ENCODE measurements at regions of chr17 and their contacts with region 1.

Region 1: GRCh38 chr17:40443583-40444327 is 505 bp downstream of the IGFBP4 start:
- DNase-seq: peak; percentile 55 to 69 (median 62)
- H3K4me3 ChIP-seq: peak overlapping the region; percentile 67 to 73
- H3K4me3 Mint-ChIP-seq: peak overlapping the region; percentile 80 to 97 (median 86)
- H3K27ac ChIP-seq: peak overlapping the region; percentile 37
- H3K27ac Mint-ChIP-seq: peak overlapping the region; percentile 85 to 97 (median 93)
- H3K4me1 ChIP-seq: peaks cover 48% of the 10 kb centered on the region
- H3K4me1 Mint-ChIP-seq: peaks cover 23 to 51% (median 35%) of the 10 kb centered on the region in 4 donors
- H3K27me3 ChIP-seq: no peaks in the 10 kb centered on the region
- H3K27me3 Mint-ChIP-seq: peaks cover 2 to 6% of the 10 kb centered on the region in 2 donors

Region 2: GRCh38 chr17:40362696-40363110 is 81.1 kb before region 1 on chr17:
- CTCF ChIA-PET with region 1: interaction called, 11 read pairs
- POLR2A ChIA-PET with region 1: interaction called, 5 read pairs
- intact Hi-C with region 1: loop called (anchors 2 kb)
- DNase-seq: peak; percentile 72 to 76 (median 74)
- H3K4me3 ChIP-seq: peak overlapping the region in 1 of 2 donors; percentile 47
- H3K4me3 Mint-ChIP-seq: peak overlapping the region in 7 of 8 donors; percentile 39 to 82 (median 64)
- H3K27ac ChIP-seq: no peak overlapping the region
- H3K27ac Mint-ChIP-seq: peak overlapping the region in 3 of 7 donors; percentile 11 to 69 (median 57)
- H3K4me1 ChIP-seq: peaks cover 21% of the 10 kb centered on the region
- H3K4me1 Mint-ChIP-seq: peaks cover 5 to 12% (median 9%) of the 10 kb centered on the region in 4 donors
- H3K27me3 ChIP-seq: no peaks in the 10 kb centered on the region
- H3K27me3 Mint-ChIP-seq: peaks cover 0 to 7% of the 10 kb centered on the region in 2 donors

Region 3: GRCh38 chr17:40417609-40418427 is 25.9 kb before region 1 on chr17 and contains the start of gene TOP2A:
- CTCF ChIA-PET with region 1: interaction called, 72 read pairs
- POLR2A ChIA-PET with region 1: interaction called, 17 read pairs
- intact Hi-C with region 1: no loop called
- DNase-seq: peak; percentile 98 to 99 (median 98)
- H3K4me3 ChIP-seq: peak within 1 kb of the TSS; percentile 77 to 91
- H3K4me3 Mint-ChIP-seq: peak within 1 kb of the TSS; percentile 90 to 97 (median 95)
- H3K27ac ChIP-seq: peak within 1 kb of the TSS; percentile 49
- H3K27ac Mint-ChIP-seq: peak within 1 kb of the TSS; percentile 69 to 97 (median 93)
- H3K4me1 ChIP-seq: peaks cover 37% of the 10 kb centered on the region
- H3K4me1 Mint-ChIP-seq: peaks cover 15 to 35% (median 28%) of the 10 kb centered on the region in 4 donors
- H3K27me3 ChIP-seq: no peaks in the 10 kb centered on the region
- H3K27me3 Mint-ChIP-seq: no peaks in the 10 kb centered on the region
- total RNA-seq, gene TOP2A: 0.47 to 1.1 TPM

Region 4: GRCh38 chr17:40474419-40475002 is 30.8 kb after region 1 on chr17:
- CTCF ChIA-PET with region 1: interaction called, 15 read pairs
- POLR2A ChIA-PET with region 1: interaction called, 3 read pairs
- intact Hi-C with region 1: no loop called
- DNase-seq: no peak
- H3K4me3 ChIP-seq: no peak overlapping the region
- H3K4me3 Mint-ChIP-seq: no peak overlapping the region
- H3K27ac ChIP-seq: no peak overlapping the region
- H3K27ac Mint-ChIP-seq: peak overlapping the region in 2 of 7 donors; percentile 18 to 68
- H3K4me1 ChIP-seq: peaks cover 32% of the 10 kb centered on the region
- H3K4me1 Mint-ChIP-seq: peaks cover 6 to 26% (median 6%) of the 10 kb centered on the region in 4 donors
- H3K27me3 ChIP-seq: no peaks in the 10 kb centered on the region
- H3K27me3 Mint-ChIP-seq: no peaks in the 10 kb centered on the region

Region 5: DNA sequence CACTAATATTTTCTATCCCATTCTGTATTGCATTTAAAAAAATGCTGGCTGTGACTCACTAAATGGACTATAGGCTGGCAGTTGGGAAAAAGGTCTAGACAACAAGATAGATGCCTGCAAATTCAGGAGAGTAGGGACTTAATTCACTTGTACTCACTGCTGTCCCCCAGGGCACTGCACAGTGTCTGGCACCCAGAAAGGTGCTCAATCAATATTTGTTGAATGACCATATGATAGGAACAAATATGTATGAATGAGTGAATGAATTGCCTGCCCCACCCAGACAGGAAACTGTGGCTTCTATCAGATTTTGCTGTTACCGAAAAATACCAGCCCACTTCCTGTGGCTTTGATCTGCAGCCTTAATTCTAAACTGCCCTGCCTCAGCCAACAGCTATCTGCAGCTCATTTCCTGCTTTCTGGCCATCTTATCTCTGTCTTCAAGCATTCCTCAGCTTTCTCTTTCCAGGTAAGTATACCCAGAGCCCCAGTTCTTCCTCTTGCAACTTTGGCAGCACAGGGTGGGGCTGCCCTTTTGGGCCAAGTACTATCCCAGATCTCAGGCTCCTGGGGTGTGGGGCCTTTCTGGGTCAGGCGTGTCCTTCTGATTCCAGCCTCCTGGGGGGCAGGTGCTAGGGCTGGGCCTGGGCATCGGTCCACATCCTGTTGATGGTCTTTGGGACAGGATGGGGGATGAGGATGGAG is 73.0 kb after region 1 on chr17:
- CTCF ChIA-PET with region 1: interaction called, 3 read pairs
- POLR2A ChIA-PET with region 1: interaction called, 5 read pairs
- intact Hi-C with region 1: loop called (anchors 5 kb)
- DNase-seq: peak; percentile 84 to 90 (median 87)
- H3K4me3 ChIP-seq: peak overlapping the region; percentile 51 to 70
- H3K4me3 Mint-ChIP-seq: peak overlapping the region; percentile 76 to 91 (median 84)
- H3K27ac ChIP-seq: peak overlapping the region; percentile 32
- H3K27ac Mint-ChIP-seq: peak overlapping the region; percentile 89 to 99 (median 96)
- H3K4me1 ChIP-seq: peaks cover 77% of the 10 kb centered on the region
- H3K4me1 Mint-ChIP-seq: peaks cover 51 to 76% (median 61%) of the 10 kb centered on the region in 4 donors
- H3K27me3 ChIP-seq: no peaks in the 10 kb centered on the region
- H3K27me3 Mint-ChIP-seq: peaks cover 0 to 2% of the 10 kb centered on the region in 2 donors

Region 6: DNA sequence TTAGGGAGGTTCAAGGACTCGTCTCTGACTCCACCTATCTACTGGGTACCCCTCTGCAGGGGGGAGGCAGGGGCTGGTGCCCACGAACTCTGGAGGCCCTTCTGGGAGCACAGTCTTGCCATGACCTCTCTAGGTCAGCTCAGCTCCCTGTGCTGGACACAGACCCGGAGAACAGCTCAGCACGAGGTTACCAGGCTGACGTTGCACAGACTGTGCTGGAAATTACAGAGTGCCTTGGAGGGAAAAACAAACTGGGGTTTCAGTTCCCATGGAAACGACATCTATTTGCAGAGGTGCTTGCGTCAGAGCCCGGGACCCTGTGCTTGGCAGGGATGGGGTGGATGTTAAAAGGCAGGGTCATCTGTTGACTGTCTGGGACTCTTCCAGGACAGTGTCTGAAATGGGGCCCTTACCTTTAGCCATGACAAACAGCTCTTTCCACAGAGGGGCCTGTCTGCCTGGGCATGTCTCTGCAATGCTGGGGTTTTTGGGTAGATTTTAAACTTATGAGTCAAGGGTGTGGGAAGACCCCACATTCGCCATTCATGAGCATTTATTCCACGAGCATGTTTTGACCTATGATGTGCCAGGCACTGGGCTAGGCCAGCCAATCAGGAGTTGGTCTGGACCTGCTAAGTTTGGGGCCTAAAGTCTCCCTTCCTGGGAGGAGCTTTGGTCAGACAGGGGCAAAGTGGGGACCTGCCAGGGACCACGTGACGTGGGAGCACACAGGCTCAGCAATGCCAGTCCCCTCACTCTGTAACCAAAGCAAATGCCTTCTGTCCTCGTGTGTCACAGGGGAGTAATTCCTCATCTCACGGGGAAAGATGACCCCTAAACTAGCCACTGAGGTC is 99.0 kb after region 1 on chr17:
- CTCF ChIA-PET with region 1: interaction called, 192 read pairs
- POLR2A ChIA-PET with region 1: interaction called, 16 read pairs
- intact Hi-C with region 1: no loop called
- DNase-seq: peak in 4 of 5 donors; percentile 37 to 82 (median 50)
- H3K4me3 ChIP-seq: no peak overlapping the region
- H3K4me3 Mint-ChIP-seq: peak overlapping the region in 6 of 8 donors; percentile 67 to 94 (median 88)
- H3K27ac ChIP-seq: peak overlapping the region; percentile 69
- H3K27ac Mint-ChIP-seq: peak overlapping the region; percentile 94 to 100 (median 99)
- H3K4me1 ChIP-seq: peaks cover 90% of the 10 kb centered on the region
- H3K4me1 Mint-ChIP-seq: peaks cover 60 to 91% (median 75%) of the 10 kb centered on the region in 4 donors
- H3K27me3 ChIP-seq: no peaks in the 10 kb centered on the region
- H3K27me3 Mint-ChIP-seq: peaks cover 0 to 4% of the 10 kb centered on the region in 2 donors

Region 7: DNA sequence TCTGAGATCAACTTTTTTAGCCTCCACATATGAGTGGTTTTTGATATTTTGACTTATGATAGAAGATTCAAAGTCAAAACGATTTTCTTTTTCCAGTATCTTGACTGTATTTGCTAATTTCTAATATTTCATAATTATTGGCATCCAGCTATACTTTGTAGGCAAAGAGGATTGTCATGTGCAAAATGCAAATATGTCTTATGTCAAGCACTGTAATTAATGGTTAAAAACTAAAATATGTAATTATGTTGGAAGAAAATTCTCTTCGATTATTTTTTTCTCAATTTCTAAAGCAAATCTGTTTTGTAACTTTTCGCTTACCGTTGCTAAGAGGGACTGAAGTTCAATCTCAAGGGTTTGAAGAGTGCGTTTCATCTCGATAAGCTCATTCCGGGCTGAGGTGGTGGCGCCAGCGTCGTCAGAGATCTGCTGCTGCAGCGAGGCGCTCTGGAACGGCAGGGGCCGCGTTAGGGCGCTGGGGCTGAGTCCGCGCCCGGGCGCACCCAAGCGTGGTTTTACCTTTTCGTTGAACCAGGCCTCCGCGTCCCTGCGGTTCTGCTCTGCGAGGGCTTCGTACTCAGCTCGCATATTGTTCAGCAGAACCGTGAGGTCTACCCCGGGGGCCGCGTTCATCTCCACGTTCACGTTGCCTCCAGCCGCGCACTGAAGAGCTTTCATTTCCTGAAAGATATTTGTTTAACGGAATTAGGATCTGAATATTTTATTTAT is 335.6 kb after region 1 on chr17:
- CTCF ChIA-PET with region 1: no interaction called
- POLR2A ChIA-PET with region 1: no interaction called
- intact Hi-C with region 1: no loop called
- DNase-seq: peak in 1 of 5 donors; percentile 7
- H3K4me3 ChIP-seq: peak overlapping the region in 1 of 2 donors; percentile 11
- H3K4me3 Mint-ChIP-seq: peak overlapping the region in 7 of 8 donors; percentile 27 to 66 (median 44)
- H3K27ac ChIP-seq: no peak overlapping the region
- H3K27ac Mint-ChIP-seq: no peak overlapping the region
- H3K4me1 ChIP-seq: no peaks in the 10 kb centered on the region
- H3K4me1 Mint-ChIP-seq: peaks cover 0 to 7% (median under 1%) of the 10 kb centered on the region in 4 donors
- H3K27me3 ChIP-seq: peaks cover 30% of the 10 kb centered on the region
- H3K27me3 Mint-ChIP-seq: peaks cover 48 to 64% of the 10 kb centered on the region in 2 donors

Measured in CD4-positive, alpha-beta memory T cell (primary cell).